ENCODE measurements at regions of chr10 and their contacts with region 1.

Region 1: GRCh38 chr10:102159051-102159597 is 6.9 kb downstream of the NOLC1 start:
- DNase-seq: no peak
- ATAC-seq: no peak
- H3K4me3 ChIP-seq: no peak overlapping the region
- H3K4me3 Mint-ChIP-seq: no peak overlapping the region
- H3K27ac ChIP-seq: no peak overlapping the region
- H3K27ac Mint-ChIP-seq: peak overlapping the region in 1 of 2 donors; percentile 4
- H3K4me1 ChIP-seq: peaks cover 0 to 16% of the 10 kb centered on the region in 2 experiments
- H3K4me1 Mint-ChIP-seq: peaks cover 26 to 31% (median 29%) of the 10 kb centered on the region in 3 donors
- H3K27me3 ChIP-seq: no peaks in the 10 kb centered on the region
- H3K27me3 Mint-ChIP-seq: no peaks in the 10 kb centered on the region

Region 2: DNA sequence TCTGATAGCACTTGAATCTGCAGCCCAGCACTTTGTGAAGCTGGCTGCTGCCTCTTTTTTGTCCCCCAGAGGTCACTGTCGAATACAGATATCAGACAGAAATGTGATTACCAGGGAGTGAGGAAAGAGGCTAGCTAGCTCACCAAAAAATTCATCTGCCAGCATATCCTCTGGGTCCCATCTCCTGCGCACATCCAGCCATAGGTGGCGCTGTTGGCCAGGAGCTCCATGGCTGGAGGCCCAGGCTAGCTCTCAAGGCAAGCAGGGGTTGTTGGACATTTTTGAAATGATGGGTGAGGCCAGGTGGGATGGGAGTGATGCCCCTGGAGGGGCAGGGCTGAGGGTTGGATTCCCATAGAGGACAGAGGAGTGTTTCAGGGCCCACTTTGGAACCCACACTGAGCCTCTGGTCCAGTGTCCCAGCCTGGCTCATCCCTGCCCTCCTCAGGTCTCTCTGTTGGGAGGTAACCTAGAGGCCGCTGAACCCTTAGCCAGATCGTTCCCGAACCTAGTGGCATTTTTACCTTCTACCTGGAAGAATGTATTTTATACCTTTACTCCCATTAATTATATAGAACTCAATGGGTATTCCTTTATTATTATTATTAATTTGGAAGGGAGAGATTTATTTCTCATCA is 556.2 kb before region 1 on chr10:
- CTCF ChIA-PET with region 1: no interaction called
- POLR2A ChIA-PET with region 1: no interaction called
- DNase-seq: peak in 32 of 35 experiments; percentile 13 to 67 (median 42)
- ATAC-seq: peak; percentile 52 to 79 (median 68)
- H3K4me3 ChIP-seq: no peak overlapping the region
- H3K4me3 Mint-ChIP-seq: no peak overlapping the region
- H3K27ac ChIP-seq: no peak overlapping the region
- H3K27ac Mint-ChIP-seq: no peak overlapping the region
- H3K4me1 ChIP-seq: no peaks in the 10 kb centered on the region
- H3K4me1 Mint-ChIP-seq: no peaks in the 10 kb centered on the region
- H3K27me3 ChIP-seq: no peaks in the 10 kb centered on the region
- H3K27me3 Mint-ChIP-seq: no peaks in the 10 kb centered on the region

Region 3: GRCh38 chr10:102040305-102041050 is 118.6 kb before region 1 on chr10:
- CTCF ChIA-PET with region 1: no interaction called
- POLR2A ChIA-PET with region 1: interaction called in 1 of 2 experiments, 13 read pairs
- DNase-seq: no peak
- ATAC-seq: no peak
- H3K4me3 ChIP-seq: no peak overlapping the region
- H3K4me3 Mint-ChIP-seq: no peak overlapping the region
- H3K27ac ChIP-seq: no peak overlapping the region
- H3K27ac Mint-ChIP-seq: no peak overlapping the region
- H3K4me1 ChIP-seq: no peaks in the 10 kb centered on the region
- H3K4me1 Mint-ChIP-seq: peaks cover 19 to 32% (median 25%) of the 10 kb centered on the region in 3 donors
- H3K27me3 ChIP-seq: no peaks in the 10 kb centered on the region
- H3K27me3 Mint-ChIP-seq: no peaks in the 10 kb centered on the region

Region 4: GRCh38 chr10:102121754-102122372 is 37.3 kb before region 1 on chr10:
- CTCF ChIA-PET with region 1: interaction called in 1 of 2 experiments, 10 read pairs
- POLR2A ChIA-PET with region 1: no interaction called
- DNase-seq: no peak
- ATAC-seq: no peak
- H3K4me3 ChIP-seq: peak overlapping the region in 1 of 2 donors; percentile 94
- H3K4me3 Mint-ChIP-seq: peak overlapping the region; percentile 84 to 87 (median 87)
- H3K27ac ChIP-seq: peak overlapping the region; percentile 91
- H3K27ac Mint-ChIP-seq: peak overlapping the region; percentile 95
- H3K4me1 ChIP-seq: peaks cover 19 to 41% of the 10 kb centered on the region in 2 experiments
- H3K4me1 Mint-ChIP-seq: peaks cover 38 to 46% (median 42%) of the 10 kb centered on the region in 3 donors
- H3K27me3 ChIP-seq: no peaks in the 10 kb centered on the region
- H3K27me3 Mint-ChIP-seq: no peaks in the 10 kb centered on the region